Right lobe of liver (tissue), 6 donors: ENCODE measurements at regions of chr6 and their contacts with region 1.

Region 1: GRCh38 chr6:170279977-170280688 is 10.7 kb downstream of the DLL1 start:
- DNase-seq: peak in 2 of 3 donors; percentile 66 to 76
- ATAC-seq: peak; percentile 65 to 85 (median 73)
- H3K4me3 ChIP-seq: peak overlapping the region in 2 of 3 donors; percentile 10 to 31
- H3K27ac ChIP-seq: peak overlapping the region in 2 of 3 donors; percentile 43 to 53
- H3K4me1 ChIP-seq: peaks cover 0 to 20% (median 2%) of the 10 kb centered on the region in 4 donors
- H3K27me3 ChIP-seq: no peaks in the 10 kb centered on the region
- CTCF ChIP-seq: no peak
- POLR2A ChIP-seq: no peak

Region 2: GRCh38 chr6:170178561-170179477 is 101.3 kb before region 1 on chr6:
- intact Hi-C with region 1: loop called in 1 of 2 experiments (anchors 10 kb)
- DNase-seq: peak; percentile 82 to 89 (median 88)
- ATAC-seq: peak; percentile 82 to 89 (median 86)
- H3K4me3 ChIP-seq: no peak overlapping the region
- H3K27ac ChIP-seq: peak overlapping the region; percentile 40 to 63 (median 58)
- H3K4me1 ChIP-seq: peaks cover 0 to 24% (median 10%) of the 10 kb centered on the region in 4 donors
- H3K27me3 ChIP-seq: no peaks in the 10 kb centered on the region
- CTCF ChIP-seq: no peak
- POLR2A ChIP-seq: no peak

Region 3: DNA sequence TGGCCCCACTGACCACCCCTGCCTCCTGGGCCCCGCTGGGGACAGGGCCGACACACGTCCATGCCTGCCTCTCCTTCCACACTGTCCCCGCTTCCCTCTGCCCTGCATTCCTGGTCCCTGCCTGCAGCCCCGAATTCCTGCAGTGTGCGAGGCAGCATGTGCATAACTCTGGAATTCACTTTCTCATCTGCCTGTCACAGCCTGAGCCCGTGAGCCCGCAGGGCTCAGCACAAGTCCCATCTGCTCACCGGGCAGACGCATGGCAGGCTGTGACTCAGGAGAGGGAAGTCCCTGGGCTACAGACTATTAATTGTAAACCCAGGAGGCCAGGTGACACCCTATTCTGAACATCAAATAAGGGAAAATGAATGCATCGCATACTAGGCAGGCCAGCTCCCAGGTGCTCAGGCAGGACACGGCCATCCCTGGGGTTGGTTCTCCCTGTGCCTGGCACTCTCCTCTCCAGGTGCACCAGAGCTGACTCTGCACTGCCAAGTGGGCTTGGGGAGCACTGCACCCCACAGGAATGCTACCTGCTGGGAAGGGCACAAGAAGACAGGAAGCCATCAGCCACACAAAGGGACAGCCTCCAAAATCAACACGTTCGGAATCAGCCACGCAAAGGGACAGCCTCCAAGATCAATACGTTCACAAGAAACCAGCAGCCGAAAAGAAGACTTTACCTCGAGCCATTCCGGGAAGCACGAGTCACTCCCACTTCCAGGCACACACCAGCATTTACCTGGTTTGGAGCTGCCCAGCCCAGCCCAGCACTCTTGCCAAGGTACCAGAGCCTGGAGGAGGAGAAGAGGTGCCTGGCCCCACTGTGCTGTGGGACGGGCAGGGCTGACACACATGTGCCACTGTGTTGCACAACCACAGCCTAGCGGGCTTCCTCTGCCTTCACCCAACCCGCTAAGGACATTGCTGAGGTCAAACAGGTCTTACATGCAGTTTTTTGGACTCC is 55.2 kb before region 1 on chr6:
- intact Hi-C with region 1: loop called in 1 of 2 experiments (anchors 10 kb)
- DNase-seq: peak; percentile 80 to 92 (median 88)
- ATAC-seq: peak; percentile 85 to 89 (median 86)
- H3K4me3 ChIP-seq: no peak overlapping the region
- H3K27ac ChIP-seq: peak overlapping the region; percentile 69 to 83 (median 70)
- H3K4me1 ChIP-seq: peaks cover 0 to 26% (median 15%) of the 10 kb centered on the region in 4 donors
- H3K27me3 ChIP-seq: no peaks in the 10 kb centered on the region
- CTCF ChIP-seq: peak in 2 of 4 donors; percentile 8 to 9
- POLR2A ChIP-seq: no peak